Activated naive CD4-positive, alpha-beta T cell treated with anti-CD3 and anti-CD28 coated beads for 36 hours (primary cell): ENCODE measurements at regions of chr6 and their contacts with region 1.

Region 1: DNA sequence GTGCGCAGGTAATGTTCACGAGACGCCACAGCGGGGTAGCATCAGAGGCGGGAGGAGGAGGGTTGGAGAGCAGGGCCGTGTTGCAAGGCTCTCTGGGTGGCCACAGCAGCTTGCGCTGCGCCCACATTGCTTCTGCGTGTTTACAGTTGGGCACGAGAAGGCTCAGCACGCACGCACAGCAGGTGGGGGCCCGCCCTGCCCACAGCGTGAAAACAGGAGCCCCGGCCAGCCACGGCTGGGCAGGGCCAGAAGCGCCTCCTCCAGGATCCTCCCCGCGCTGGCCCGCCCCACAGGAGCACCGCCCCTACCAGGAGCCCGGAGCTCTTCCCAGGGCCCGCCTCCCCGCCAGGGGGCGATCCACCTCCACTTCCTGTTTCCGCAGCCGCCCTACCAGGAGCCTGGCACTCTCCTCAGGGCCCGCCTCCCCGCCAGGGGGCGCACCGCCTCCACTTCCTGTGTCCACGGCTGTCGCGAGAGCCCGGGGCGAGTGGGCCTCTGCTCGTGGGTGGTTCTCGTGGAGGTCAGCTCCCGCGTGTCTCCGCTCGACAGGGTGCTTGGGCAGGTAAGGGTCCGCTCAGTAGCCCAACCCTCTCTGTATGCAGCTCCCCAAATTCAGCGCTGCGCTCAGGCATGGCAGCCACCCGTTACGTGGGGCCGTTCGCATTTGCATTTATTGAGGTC is at the start of gene FAM50B:
- DNase-seq: peak; percentile 95
- H3K4me3 Mint-ChIP-seq: peak within 1 kb of the TSS; percentile 71
- H3K27ac Mint-ChIP-seq: peak within 1 kb of the TSS; percentile 63
- H3K4me1 Mint-ChIP-seq: peaks cover 28% of the 10 kb centered on the region
- H3K27me3 Mint-ChIP-seq: no peaks in the 10 kb centered on the region
- total RNA-seq, gene FAM50B: 4.4 to 5.1 TPM

Region 2: GRCh38 chr6:3751730-3752542 is 97.1 kb before region 1 on chr6:
- CTCF ChIA-PET with region 1: interaction called, 13 read pairs
- intact Hi-C with region 1: no loop called
- DNase-seq: peak; percentile 76
- H3K4me3 Mint-ChIP-seq: peak overlapping the region; percentile 43
- H3K27ac Mint-ChIP-seq: no peak overlapping the region
- H3K4me1 Mint-ChIP-seq: no peaks in the 10 kb centered on the region
- H3K27me3 Mint-ChIP-seq: peaks cover 33% of the 10 kb centered on the region

Region 3: DNA sequence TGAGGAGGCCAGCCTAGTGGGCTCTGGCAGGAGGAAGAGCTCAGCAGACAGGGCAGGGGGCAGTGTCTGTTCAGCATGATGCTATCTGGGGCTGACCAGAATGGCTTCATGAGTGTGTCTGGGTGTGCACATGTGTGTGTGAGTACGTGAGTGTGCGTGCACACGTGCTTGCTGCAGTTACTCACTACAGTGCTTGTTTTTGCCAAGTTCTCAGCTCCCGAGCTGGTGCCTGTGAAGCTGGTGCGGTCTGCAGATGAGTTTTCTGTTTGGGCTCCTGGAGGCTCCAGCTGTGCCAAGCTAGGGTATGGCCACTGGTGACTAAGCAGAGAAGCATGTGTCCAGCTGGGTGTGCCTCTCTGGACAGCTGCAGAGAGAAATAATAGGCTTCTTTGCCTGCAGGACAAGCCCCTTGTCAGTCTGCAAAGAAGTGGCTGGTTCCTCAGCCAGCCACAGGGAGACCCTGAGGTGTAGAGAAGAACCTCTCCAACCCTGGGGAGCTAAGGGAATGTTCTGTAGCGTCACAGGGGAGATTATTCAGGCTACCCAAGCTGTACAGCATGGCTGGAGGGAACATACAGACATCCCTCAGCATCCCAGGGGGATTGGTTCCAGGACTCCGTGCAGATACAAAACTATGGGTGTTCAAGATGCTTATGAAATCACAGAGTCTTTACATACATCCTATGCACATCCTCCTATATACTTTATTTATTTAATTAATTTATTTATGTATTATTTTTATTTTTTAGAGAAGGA is 40.1 kb before region 1 on chr6:
- CTCF ChIA-PET with region 1: no interaction called
- intact Hi-C with region 1: no loop called
- DNase-seq: no peak
- H3K4me3 Mint-ChIP-seq: no peak overlapping the region
- H3K27ac Mint-ChIP-seq: no peak overlapping the region
- H3K4me1 Mint-ChIP-seq: no peaks in the 10 kb centered on the region
- H3K27me3 Mint-ChIP-seq: no peaks in the 10 kb centered on the region

Region 4: GRCh38 chr6:3868544-3868943 is 19.5 kb after region 1 on chr6:
- CTCF ChIA-PET with region 1: interaction called, 24 read pairs
- intact Hi-C with region 1: loop called (anchors 1 kb)
- DNase-seq: no peak
- H3K4me3 Mint-ChIP-seq: no peak overlapping the region
- H3K27ac Mint-ChIP-seq: peak overlapping the region; percentile 48
- H3K4me1 Mint-ChIP-seq: peaks cover 26% of the 10 kb centered on the region
- H3K27me3 Mint-ChIP-seq: peaks cover 2% of the 10 kb centered on the region

Region 5: GRCh38 chr6:3929281-3929798 is 80.3 kb after region 1 on chr6:
- CTCF ChIA-PET with region 1: interaction called, 43 read pairs
- intact Hi-C with region 1: loop called (anchors 1 kb)
- DNase-seq: no peak
- H3K4me3 Mint-ChIP-seq: no peak overlapping the region
- H3K27ac Mint-ChIP-seq: no peak overlapping the region
- H3K4me1 Mint-ChIP-seq: no peaks in the 10 kb centered on the region
- H3K27me3 Mint-ChIP-seq: no peaks in the 10 kb centered on the region

Region 6: GRCh38 chr6:3990692-3991501 is 141.8 kb after region 1 on chr6:
- CTCF ChIA-PET with region 1: interaction called, 9 read pairs
- intact Hi-C with region 1: loop called (anchors 1 kb)
- DNase-seq: peak; percentile 85
- H3K4me3 Mint-ChIP-seq: peak overlapping the region; percentile 3
- H3K27ac Mint-ChIP-seq: no peak overlapping the region
- H3K4me1 Mint-ChIP-seq: peaks cover 6% of the 10 kb centered on the region
- H3K27me3 Mint-ChIP-seq: no peaks in the 10 kb centered on the region

Region 7: DNA sequence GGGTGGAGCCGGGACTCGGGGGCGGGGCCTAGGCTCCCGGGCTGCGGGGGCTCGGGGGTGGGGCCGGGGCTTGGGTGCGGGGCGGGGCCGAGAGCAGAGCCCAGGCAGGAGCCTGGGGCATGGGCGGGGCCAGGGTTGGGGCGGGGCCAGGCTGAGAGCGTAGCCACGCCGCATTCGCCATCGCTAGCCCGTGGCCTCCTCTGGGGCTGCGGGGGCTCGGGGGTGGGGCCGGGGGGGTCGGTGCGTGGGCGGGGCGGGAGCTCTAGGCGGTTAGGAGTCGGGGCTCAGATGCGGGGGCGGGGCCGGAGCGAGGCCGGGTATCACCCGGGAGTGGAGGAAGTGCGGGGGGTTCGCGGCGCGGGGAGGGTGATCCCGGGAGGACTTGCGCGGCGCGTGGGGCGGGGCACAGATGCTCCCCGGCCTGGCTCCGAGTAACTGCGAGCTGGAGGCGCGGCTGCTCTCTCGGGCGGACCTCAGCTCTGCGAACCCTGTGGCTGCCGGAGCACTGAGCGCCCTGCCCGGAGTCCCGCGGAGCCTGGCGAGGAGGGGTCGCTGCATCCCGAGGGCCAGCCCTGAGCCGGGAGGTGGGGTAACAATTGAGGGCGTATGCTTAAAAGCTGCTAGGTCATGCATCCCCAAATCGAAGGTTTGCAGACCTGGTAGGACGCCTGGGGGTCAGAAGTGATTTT is 286.7 kb after region 1 on chr6:
- CTCF ChIA-PET with region 1: no interaction called
- intact Hi-C with region 1: loop called (anchors 5 kb)
- DNase-seq: peak; percentile 92
- H3K4me3 Mint-ChIP-seq: peak overlapping the region; percentile 81
- H3K27ac Mint-ChIP-seq: peak overlapping the region; percentile 65
- H3K4me1 Mint-ChIP-seq: peaks cover 40% of the 10 kb centered on the region
- H3K27me3 Mint-ChIP-seq: no peaks in the 10 kb centered on the region